Heart left ventricle (tissue), 16 donors: ENCODE measurements at regions of chr7 and their contacts with region 1.

Region 1: DNA sequence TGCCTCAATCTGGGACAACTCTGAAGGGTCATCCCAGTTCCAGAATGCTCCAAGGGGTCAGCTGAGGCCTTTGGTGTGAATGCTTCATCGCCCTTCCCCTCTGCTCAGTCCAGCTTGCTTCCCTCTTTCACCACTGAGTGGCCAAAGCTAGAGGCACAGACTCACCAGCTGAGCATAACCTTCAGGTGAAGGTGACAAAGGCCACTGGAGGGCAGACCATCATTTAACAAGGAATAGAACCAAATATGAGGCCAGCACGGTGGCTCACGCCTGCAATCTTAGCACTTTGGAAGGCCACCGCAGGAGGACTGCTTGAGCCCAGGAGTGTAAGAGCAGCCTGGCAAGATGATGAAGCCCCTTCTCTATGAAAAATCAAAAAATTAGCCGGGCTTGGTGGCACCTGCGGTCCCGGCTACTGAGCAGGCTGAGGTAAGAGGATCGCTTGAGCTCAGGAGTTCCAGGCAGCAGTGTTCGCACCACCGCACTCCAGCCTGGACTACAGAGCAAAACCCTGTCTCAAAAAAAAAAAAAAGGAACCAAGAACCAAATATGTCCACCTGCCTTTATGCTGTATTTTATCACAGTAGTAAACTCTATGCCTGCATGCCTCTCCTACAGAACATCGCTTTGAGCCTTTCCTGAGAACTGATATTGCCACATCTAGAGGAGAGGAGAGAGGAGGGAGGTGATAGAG is 13.4 kb downstream of the PRKAG2 start:
- DNase-seq: peak in 1 of 5 donors; percentile 5
- ATAC-seq: no peak
- H3K4me3 ChIP-seq: no peak overlapping the region
- H3K27ac ChIP-seq: no peak overlapping the region
- H3K4me1 ChIP-seq: peaks cover 0 to 32% (median 10%) of the 10 kb centered on the region in 12 donors
- H3K27me3 ChIP-seq: no peaks in the 10 kb centered on the region
- CTCF ChIP-seq: peak in 1 of 12 donors; percentile 4
- POLR2A ChIP-seq: no peak

Region 2: DNA sequence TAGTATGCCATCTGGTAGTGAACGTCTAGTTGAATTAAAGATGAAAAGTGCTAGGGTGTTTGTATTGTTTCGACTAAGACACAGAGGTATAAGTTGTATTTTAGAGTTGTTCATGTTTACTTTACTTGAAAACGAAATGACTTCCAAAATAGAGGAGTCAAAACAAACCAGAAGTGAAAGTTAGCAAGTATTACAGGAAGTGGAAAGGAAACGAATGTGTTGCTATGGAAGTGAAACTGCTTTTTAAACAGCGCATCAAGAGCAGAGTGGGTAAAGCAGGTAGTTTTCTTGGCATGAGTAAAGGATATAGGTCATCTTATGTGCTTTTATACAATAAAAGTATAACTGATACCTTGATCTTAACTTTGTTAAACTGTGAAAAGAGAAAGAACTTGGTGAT is 72.7 kb after region 1 on chr7:
- intact Hi-C with region 1: loop called in 1 of 10 experiments (anchors 5 kb)
- DNase-seq: no peak
- ATAC-seq: peak in 1 of 4 donors; percentile 35
- H3K4me3 ChIP-seq: no peak overlapping the region
- H3K27ac ChIP-seq: peak overlapping the region in 1 of 12 donors; percentile 89
- H3K4me1 ChIP-seq: peaks cover 0 to 38% (median 0%) of the 10 kb centered on the region in 12 donors
- H3K27me3 ChIP-seq: peaks cover 0 to 5% (median 0%) of the 10 kb centered on the region in 9 donors
- CTCF ChIP-seq: no peak
- POLR2A ChIP-seq: no peak

Region 3: GRCh38 chr7:151992375-151992774 is 128.8 kb after region 1 on chr7:
- intact Hi-C with region 1: loop called in 1 of 10 experiments (anchors 5 kb)
- DNase-seq: peak; percentile 36 to 76 (median 58)
- ATAC-seq: peak; percentile 41 to 86 (median 85)
- H3K4me3 ChIP-seq: no peak overlapping the region
- H3K27ac ChIP-seq: no peak overlapping the region
- H3K4me1 ChIP-seq: peaks cover 0 to 14% (median 0%) of the 10 kb centered on the region in 12 donors
- H3K27me3 ChIP-seq: peaks cover 0 to 17% (median 0%) of the 10 kb centered on the region in 9 donors
- CTCF ChIP-seq: peak in 7 of 12 donors; percentile 9 to 37 (median 21)
- POLR2A ChIP-seq: no peak

Region 4: DNA sequence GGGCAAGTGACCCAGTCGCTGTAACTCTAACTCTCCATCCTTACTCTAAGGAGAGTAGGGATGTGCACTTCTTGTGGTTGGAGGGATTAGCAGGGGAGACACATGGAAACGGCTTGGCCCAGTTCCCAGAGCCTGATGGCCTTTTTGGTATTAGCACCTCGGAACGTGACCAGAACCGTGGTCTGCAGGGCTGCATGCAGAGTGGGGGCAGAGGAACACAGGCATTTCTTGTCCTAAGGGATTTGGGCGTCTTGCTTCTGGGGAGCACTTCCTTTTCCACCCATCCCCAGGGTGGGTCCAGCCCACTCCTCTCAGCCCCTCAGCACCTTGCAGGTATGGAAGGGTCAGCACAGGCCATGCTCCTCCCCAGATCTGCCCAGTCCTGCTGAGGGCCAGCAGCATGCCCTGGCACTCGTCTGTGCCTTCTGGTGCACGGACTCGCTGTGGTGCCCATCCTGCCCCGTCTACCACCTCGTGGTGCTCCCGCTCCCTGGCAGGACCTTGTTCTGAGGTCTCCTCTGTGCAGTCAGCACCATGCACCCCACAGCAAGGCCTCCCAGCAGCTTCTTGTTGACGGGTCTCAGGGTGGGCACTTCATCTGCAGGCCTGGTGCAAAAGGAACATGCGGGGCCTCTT is 1005.6 kb after region 1 on chr7:
- intact Hi-C with region 1: no loop called
- DNase-seq: no peak
- ATAC-seq: no peak
- H3K4me3 ChIP-seq: no peak overlapping the region
- H3K27ac ChIP-seq: no peak overlapping the region
- H3K4me1 ChIP-seq: no peaks in the 10 kb centered on the region
- H3K27me3 ChIP-seq: no peaks in the 10 kb centered on the region
- CTCF ChIP-seq: no peak
- POLR2A ChIP-seq: no peak